Activated B cell treated with CpG ODN at 0.5 μM for 24 hours (primary cell): ENCODE measurements at regions of chr11 and their contacts with region 1.

Region 1: DNA sequence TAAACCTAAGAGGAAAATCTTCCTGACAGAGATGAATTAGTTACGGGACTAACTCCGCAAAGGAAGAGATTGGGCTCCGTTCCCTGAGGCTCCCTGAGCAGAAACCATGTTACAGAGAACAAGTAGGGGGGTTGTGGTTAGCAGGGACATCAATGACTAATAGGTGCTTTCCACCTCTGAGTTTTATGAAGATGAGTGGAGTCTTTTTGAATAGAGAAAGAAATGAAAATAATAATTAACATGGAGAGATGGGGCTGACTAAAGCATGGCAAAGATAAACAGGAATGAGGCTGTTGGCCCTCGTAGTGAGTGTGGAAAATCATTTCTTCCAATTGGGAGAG is 47.5 kb upstream of the PICALM start:
- DNase-seq: no peak
- ATAC-seq: peak; percentile 95
- H3K4me3 Mint-ChIP-seq: peak overlapping the region; percentile 46
- H3K27ac Mint-ChIP-seq: peak overlapping the region; percentile 87
- H3K4me1 Mint-ChIP-seq: peaks cover 21% of the 10 kb centered on the region
- H3K27me3 Mint-ChIP-seq: no peaks in the 10 kb centered on the region
- CTCF ChIP-seq: no peak

Region 2: DNA sequence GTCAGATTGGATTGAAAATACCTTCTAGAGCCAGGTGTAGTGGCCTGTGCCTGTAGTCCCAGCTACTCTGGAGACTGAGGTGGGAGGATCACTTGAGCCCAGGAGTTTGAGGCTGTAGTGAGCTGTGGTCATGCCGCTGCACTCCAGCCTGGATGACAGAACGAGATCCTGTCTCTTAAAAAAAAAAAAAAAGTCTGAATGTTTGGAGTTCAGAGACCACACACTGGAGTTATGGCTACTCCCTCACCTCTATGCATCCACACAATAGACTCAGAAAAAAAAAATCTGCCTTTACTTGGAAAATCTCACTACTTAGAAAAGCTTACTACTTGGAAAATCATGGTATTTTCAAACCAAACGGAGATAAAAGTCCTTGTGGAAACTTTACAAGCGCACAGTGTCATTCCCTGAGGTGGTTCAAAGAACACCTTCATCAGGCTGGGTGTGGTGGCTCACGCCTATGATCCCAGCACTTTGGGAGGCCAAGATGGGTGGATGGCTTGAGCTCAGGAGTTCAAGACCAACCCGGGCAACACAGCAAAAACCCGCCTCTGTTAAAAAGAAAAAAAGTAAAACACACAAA is 16.4 kb after region 1 on chr11:
- CTCF ChIA-PET with region 1: no interaction called
- POLR2A ChIA-PET with region 1: interaction called, 3 read pairs
- intact Hi-C with region 1: loop called (anchors 2 kb)
- DNase-seq: no peak
- ATAC-seq: no peak
- H3K4me3 Mint-ChIP-seq: no peak overlapping the region
- H3K27ac Mint-ChIP-seq: no peak overlapping the region
- H3K4me1 Mint-ChIP-seq: peaks cover 9% of the 10 kb centered on the region
- H3K27me3 Mint-ChIP-seq: no peaks in the 10 kb centered on the region
- CTCF ChIP-seq: no peak

Region 3: DNA sequence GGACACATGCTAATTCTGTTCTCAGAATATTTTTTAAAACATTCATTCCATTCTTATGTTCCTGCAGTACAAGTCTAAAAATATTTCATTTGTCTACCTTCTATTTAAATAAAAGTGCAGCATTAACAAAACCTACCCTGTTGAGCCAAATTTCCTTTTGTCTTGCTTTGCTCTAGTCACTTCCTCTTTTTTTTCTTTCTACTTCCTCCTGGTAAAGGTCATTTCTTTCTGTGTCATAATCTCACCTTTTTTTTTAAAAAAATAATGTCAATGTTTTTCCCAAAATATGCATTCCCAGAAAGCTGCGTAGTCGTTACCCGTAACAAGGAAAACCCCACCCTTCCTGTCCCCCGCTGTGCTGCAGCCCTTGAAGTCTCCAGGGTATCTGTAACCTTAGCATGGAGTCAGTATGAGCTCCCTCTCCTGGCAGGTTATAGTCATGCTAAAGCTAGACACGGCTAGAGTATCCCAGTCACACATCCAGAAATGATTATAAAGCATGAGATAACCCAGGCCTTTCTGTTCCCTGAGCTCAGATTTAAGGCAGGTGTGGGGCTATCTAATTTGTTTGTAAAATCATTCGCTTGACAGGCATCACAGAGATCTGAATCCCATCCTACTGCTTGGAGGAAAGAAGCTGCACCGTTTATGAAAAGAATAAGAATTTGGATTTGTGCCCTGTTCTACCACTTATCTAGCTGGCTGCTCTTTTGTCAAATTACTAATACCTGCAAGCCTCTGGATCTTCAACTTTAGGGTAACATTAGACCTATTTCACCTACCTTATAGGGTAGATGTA is 77.1 kb after region 1 on chr11:
- CTCF ChIA-PET with region 1: interaction called, 17 read pairs
- POLR2A ChIA-PET with region 1: interaction called, 10 read pairs
- intact Hi-C with region 1: loop called (anchors 1 kb)
- DNase-seq: peak; percentile 48
- ATAC-seq: peak; percentile 96
- H3K4me3 Mint-ChIP-seq: peak overlapping the region; percentile 76
- H3K27ac Mint-ChIP-seq: peak overlapping the region; percentile 92
- H3K4me1 Mint-ChIP-seq: peaks cover 30% of the 10 kb centered on the region
- H3K27me3 Mint-ChIP-seq: no peaks in the 10 kb centered on the region
- CTCF ChIP-seq: peak; percentile 50